ENCODE measurements at regions of chr9 and their contacts with region 1.

Region 1: DNA sequence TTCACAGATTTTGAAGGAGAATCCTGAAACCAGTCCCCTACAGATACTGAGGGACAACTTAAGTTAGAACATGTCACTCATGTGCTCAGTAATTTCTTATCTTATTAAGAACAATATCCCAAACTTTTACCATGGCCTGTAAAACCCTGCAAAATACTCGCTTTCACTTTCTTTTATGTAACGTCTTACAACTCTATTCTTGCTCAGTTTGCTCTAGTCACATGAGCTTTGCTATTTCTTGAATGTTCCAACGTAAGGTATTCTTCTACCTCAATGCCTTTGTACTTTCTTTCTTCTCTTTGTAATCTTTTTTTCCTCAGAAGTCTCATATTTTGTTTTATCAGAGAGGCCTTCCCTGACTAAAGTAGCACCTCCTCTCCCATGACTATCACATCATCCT is 14.1 kb downstream of the TMEM38B start:
- DNase-seq: peak; percentile 36
- CTCF ChIP-seq: no peak

Region 2: GRCh38 chr9:105385381-105385985 is 322.9 kb before region 1 on chr9:
- in situ Hi-C with region 1: no loop called
- DNase-seq: peak; percentile 49
- CTCF ChIP-seq: no peak

Region 3: DNA sequence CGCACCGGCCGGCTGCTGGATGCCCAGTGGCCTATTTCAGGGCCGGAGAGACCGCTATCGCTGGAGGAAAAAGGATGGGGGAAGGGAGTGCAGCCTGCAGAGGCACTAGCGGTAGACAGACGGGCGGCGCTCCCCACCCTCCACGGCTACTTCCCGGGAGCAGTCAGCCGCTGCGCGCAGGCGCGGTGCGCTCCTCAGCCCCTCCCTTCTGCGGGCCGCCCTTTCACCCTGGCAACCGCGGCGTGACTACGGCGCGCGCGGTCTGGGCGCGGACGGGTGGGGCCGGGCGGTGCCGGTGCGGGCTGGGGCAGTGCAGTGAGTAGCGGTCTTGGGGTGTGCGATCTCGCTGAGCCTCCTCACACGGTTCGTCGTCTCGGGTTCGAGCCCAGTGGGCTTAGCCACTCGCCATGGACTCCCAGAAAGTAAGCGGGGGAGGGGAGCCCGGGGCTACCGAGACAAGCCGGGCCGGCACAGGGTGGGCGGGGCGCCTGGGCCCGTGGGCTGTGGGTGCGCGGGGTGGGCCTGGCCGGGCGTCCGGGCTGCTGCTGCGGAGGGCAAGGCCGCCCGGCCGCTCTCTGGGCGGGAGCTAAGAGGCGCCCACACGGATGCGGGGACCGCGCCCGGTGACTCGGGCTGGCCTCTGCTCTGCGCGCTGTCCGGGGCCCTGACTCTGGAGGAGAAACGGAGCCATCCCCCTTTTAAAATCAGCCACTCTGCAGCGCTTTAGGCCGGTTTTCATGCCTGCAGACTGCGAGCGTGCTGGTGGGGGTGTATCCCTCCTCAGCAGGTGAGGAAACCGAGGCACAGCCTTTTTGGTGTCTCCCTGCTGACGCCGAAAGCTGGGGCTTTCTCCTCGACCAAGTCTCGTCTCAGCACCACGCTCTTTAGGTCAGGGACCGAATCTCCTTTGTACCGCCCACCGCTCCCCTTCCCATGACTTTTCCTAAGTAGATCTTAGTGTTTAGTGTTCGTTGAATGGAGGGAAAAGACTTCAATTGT is 260.3 kb before region 1 on chr9 and contains the start of gene FSD1L:
- in situ Hi-C with region 1: loop called (anchors 25 kb)
- DNase-seq: peak; percentile 94
- CTCF ChIP-seq: no peak